K562 (cell line): ENCODE measurements at regions of chr1 and their contacts with region 1.

Region 1: GRCh38 chr1:202531472-202531811 is 178.8 kb downstream of the SYT2 start:
- DNase-seq: no peak
- ATAC-seq: peak; percentile 25
- H3K4me3 ChIP-seq: no peak overlapping the region
- H3K27ac ChIP-seq: peak overlapping the region; percentile 95
- H3K4me1 ChIP-seq: peaks cover 8 to 17% of the 10 kb centered on the region in 2 experiments; a peak in 2 of 5 replicates
- H3K27me3 ChIP-seq: no peaks in the 10 kb centered on the region
- CTCF ChIP-seq: no peak
- EP300 ChIP-seq: no peak
- POLR2A ChIP-seq: no peak
- RAD21 ChIP-seq: no peak

Region 2: GRCh38 chr1:202184750-202185460 is 346.5 kb before region 1 on chr1:
- CTCF ChIA-PET with region 1: no interaction called
- POLR2A ChIA-PET with region 1: no interaction called
- in situ Hi-C with region 1: no loop called
- intact Hi-C with region 1: no loop called
- DNase-seq: peak; percentile 86 to 92 (median 90)
- ATAC-seq: peak; percentile 87
- H3K4me3 ChIP-seq: no peak overlapping the region
- H3K27ac ChIP-seq: no peak overlapping the region
- H3K4me1 ChIP-seq: peaks cover 0 to 18% of the 10 kb centered on the region in 2 experiments; a peak in 3 of 5 replicates
- H3K27me3 ChIP-seq: no peaks in the 10 kb centered on the region; a peak in 1 of 5 replicates
- CTCF ChIP-seq: peak; percentile 96
- EP300 ChIP-seq: no peak
- POLR2A ChIP-seq: no peak
- RAD21 ChIP-seq: peak in 1 of 2 experiments; percentile 55; a peak in 3 of 4 replicates

Region 3: GRCh38 chr1:202416641-202417040 is 114.8 kb before region 1 on chr1:
- CTCF ChIA-PET with region 1: no interaction called
- POLR2A ChIA-PET with region 1: no interaction called
- in situ Hi-C with region 1: no loop called
- intact Hi-C with region 1: no loop called
- DNase-seq: no peak
- ATAC-seq: no peak
- H3K4me3 ChIP-seq: no peak overlapping the region
- H3K27ac ChIP-seq: no peak overlapping the region
- H3K4me1 ChIP-seq: no peaks in the 10 kb centered on the region; a peak in 1 of 5 replicates
- H3K27me3 ChIP-seq: no peaks in the 10 kb centered on the region
- CTCF ChIP-seq: no peak
- EP300 ChIP-seq: no peak
- POLR2A ChIP-seq: no peak
- RAD21 ChIP-seq: no peak

Region 4: DNA sequence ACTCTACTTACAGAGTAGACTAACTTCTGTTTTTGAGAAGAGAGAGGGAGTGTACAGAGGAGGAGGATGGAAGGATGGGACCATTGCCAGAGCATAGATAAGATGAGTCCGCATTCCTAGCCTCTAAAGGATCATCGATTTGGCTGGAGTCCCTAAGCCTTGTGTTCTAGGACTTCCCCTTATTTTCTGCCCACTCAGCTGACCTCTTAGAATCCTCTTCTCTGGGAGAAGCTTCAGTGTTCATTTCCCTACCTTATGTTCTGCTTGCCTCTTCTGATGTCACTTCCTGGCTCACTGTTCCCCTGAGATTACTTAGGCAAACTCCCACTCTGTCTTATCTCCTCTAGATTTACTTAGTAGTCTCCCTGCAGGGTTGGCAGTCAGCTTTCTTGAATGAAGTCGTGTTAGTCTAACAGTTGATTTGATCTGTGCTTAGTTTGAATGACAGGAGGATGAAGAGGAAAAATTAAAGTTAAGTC is 22.2 kb after region 1 on chr1:
- CTCF ChIA-PET with region 1: no interaction called
- POLR2A ChIA-PET with region 1: interaction called, 3 read pairs
- in situ Hi-C with region 1: no loop called
- intact Hi-C with region 1: loop called (anchors 2 kb)
- DNase-seq: peak; percentile 37 to 95 (median 59)
- ATAC-seq: peak; percentile 92
- H3K4me3 ChIP-seq: no peak overlapping the region
- H3K27ac ChIP-seq: peak overlapping the region; percentile 76
- H3K4me1 ChIP-seq: peaks cover 11 to 36% of the 10 kb centered on the region in 2 experiments
- H3K27me3 ChIP-seq: no peaks in the 10 kb centered on the region
- CTCF ChIP-seq: no peak
- EP300 ChIP-seq: peak; percentile 92
- POLR2A ChIP-seq: 0 out of 2 replicates have a peak, but pooled peaks have one; percentile 41
- RAD21 ChIP-seq: peak in 1 of 2 experiments; percentile 15; a peak in 1 of 4 replicates

Region 5: GRCh38 chr1:202589190-202590030 is 58.0 kb after region 1 on chr1:
- CTCF ChIA-PET with region 1: no interaction called
- POLR2A ChIA-PET with region 1: no interaction called
- in situ Hi-C with region 1: no loop called
- intact Hi-C with region 1: no loop called
- DNase-seq: no peak
- ATAC-seq: no peak; the same call in 1 of the 3 replicates
- H3K4me3 ChIP-seq: no peak overlapping the region
- H3K27ac ChIP-seq: no peak overlapping the region
- H3K4me1 ChIP-seq: peaks cover 4 to 18% of the 10 kb centered on the region in 2 experiments; a peak in 4 of 5 replicates
- H3K27me3 ChIP-seq: no peaks in the 10 kb centered on the region
- CTCF ChIP-seq: no peak
- EP300 ChIP-seq: no peak
- POLR2A ChIP-seq: no peak
- RAD21 ChIP-seq: no peak

Region 6: DNA sequence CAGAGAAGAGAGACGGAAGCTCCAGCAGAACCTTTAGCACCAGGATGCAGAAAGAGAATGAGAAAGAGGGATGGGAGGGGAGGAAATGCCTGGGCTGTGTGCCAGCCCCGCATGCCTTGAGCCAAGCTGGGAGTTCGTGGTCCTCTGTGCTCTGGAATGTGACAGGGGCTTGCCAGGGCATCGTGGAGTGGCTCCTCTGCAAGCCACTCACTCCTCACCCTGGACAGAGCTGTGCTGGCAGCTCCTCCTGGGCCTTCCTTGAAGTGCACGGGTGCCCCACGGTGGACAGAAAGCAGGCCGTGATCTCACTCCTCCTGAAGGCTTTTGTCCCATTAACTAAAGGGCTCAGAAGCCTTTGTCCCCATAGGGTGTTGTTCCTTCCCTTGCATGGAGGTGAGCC is 909.3 kb after region 1 on chr1:
- CTCF ChIA-PET with region 1: no interaction called
- POLR2A ChIA-PET with region 1: no interaction called
- in situ Hi-C with region 1: no loop called
- intact Hi-C with region 1: no loop called
- DNase-seq: peak in 1 of 4 experiments; percentile 24
- ATAC-seq: peak; percentile 68
- H3K4me3 ChIP-seq: no peak overlapping the region
- H3K27ac ChIP-seq: no peak overlapping the region
- H3K4me1 ChIP-seq: no peaks in the 10 kb centered on the region
- H3K27me3 ChIP-seq: peaks cover 16 to 39% of the 10 kb centered on the region in 2 experiments; a peak in 3 of 5 replicates
- CTCF ChIP-seq: peak; percentile 28 to 48 (median 47); a peak in 4 of 6 replicates
- EP300 ChIP-seq: no peak
- POLR2A ChIP-seq: no peak
- RAD21 ChIP-seq: peak; percentile 49 to 64